Activated naive CD4-positive, alpha-beta T cell treated with anti-CD3 and anti-CD28 coated beads for 36 hours (primary cell): ENCODE measurements at regions of chr19 and their contacts with region 1.

Region 1: GRCh38 chr19:5904352-5905113 is at the start of gene VMAC:
- DNase-seq: peak; percentile 100
- H3K4me3 Mint-ChIP-seq: peak within 1 kb of the TSS; percentile 94
- H3K27ac Mint-ChIP-seq: peak within 1 kb of the TSS; percentile 99
- H3K4me1 Mint-ChIP-seq: peaks cover 37% of the 10 kb centered on the region
- H3K27me3 Mint-ChIP-seq: no peaks in the 10 kb centered on the region
- total RNA-seq, gene VMAC: 1.5 to 2.0 TPM

Region 2: GRCh38 chr19:5622463-5623396 is 281.8 kb before region 1 on chr19 and contains the starts of genes SAFB and SAFB2:
- CTCF ChIA-PET with region 1: no interaction called
- intact Hi-C with region 1: loop called (anchors 5 kb)
- DNase-seq: peak; percentile 99
- H3K4me3 Mint-ChIP-seq: peak within 1 kb of the TSS; percentile 100
- H3K27ac Mint-ChIP-seq: peak within 1 kb of the TSS; percentile 99
- H3K4me1 Mint-ChIP-seq: peaks cover 68% of the 10 kb centered on the region
- H3K27me3 Mint-ChIP-seq: no peaks in the 10 kb centered on the region
- total RNA-seq, gene SAFB: 120 to 129 TPM
- total RNA-seq, gene SAFB2: 108 to 118 TPM

Region 3: DNA sequence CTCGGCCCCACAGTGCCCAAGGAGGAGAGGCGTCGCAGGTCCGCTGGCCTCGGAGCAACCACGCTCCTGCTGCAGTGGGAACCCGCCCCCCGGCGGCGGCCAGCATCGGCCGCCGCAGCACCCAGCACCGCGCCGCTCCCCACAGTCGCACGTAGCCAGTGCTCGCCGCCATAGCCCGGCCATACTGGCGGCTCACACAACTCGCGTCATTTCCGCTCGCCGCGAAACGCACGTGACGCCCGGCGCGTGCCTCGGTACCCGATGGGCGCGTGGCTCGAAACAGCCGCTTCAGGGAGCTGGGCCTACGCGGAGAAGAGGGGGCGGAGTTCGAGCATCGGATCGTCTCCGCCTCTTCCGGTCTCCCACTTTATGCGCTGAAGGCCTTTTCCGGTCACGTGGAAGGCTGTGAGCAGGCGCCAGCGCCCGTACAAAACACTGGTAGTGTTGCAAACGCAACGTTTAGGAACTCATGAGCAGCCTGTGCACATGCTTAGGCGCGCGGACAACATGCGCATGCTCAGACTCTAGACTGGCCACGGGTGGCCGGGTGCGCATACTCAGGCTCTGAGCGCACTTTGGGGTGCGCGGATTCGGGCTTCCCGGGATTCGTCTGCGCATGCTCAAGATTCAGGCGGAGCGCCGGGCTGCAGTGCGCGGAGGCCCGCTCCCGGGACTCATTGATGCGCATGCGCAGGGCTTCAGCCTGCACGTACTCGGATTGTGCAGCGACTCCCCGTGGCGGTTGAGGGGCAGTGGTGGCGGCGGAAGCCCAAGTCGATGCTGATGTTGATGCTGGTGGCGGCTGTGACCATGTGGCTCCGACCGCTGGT is 184.4 kb before region 1 on chr19 and contains the starts of genes CATSPERD and LONP1:
- CTCF ChIA-PET with region 1: no interaction called
- intact Hi-C with region 1: loop called (anchors 1 kb)
- DNase-seq: peak; percentile 99
- H3K4me3 Mint-ChIP-seq: peak within 1 kb of the TSS; percentile 89
- H3K27ac Mint-ChIP-seq: peak within 1 kb of the TSS; percentile 98
- H3K4me1 Mint-ChIP-seq: peaks cover 33% of the 10 kb centered on the region
- H3K27me3 Mint-ChIP-seq: no peaks in the 10 kb centered on the region
- total RNA-seq, gene CATSPERD: not detected
- total RNA-seq, gene LONP1: 223 to 229 TPM

Region 4: GRCh38 chr19:5803752-5804515 is 100.6 kb before region 1 on chr19:
- CTCF ChIA-PET with region 1: interaction called, 48 read pairs
- intact Hi-C with region 1: loop called (anchors 1 kb)
- DNase-seq: peak; percentile 96
- H3K4me3 Mint-ChIP-seq: peak overlapping the region; percentile 70
- H3K27ac Mint-ChIP-seq: no peak overlapping the region
- H3K4me1 Mint-ChIP-seq: peaks cover 25% of the 10 kb centered on the region
- H3K27me3 Mint-ChIP-seq: peaks cover 19% of the 10 kb centered on the region

Region 5: DNA sequence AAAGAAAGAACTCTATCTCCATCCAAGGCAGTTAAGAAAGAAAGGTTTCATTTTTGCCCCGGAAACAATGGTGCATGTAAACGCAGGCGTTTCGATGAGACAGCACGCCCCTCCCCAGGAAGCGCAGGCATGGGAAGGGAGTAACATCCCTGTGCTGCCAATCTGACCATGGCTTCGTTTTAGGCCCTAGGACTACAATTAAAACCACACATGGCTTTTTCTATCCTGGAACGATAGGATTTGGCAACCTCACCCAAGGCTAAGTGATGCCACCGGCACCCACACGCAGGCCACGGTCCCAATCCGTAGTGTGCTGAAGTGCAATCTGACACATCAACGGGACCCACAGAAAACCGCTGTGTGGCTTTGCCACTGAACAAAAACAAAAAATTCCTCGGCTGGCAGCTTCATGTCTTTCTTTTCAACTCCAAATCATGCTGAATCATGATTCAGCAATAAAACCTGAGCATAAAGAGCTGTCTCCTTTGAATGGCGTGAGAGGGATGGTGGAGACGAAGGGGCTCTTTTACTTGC is 49.2 kb after region 1 on chr19:
- CTCF ChIA-PET with region 1: no interaction called
- intact Hi-C with region 1: loop called (anchors 1 kb)
- DNase-seq: peak; percentile 63
- H3K4me3 Mint-ChIP-seq: peak overlapping the region; percentile 36
- H3K27ac Mint-ChIP-seq: peak overlapping the region; percentile 87
- H3K4me1 Mint-ChIP-seq: peaks cover 92% of the 10 kb centered on the region
- H3K27me3 Mint-ChIP-seq: no peaks in the 10 kb centered on the region

Region 6: GRCh38 chr19:6110360-6110977 is 205.9 kb after region 1 on chr19 and contains the start of gene RFX2:
- CTCF ChIA-PET with region 1: no interaction called
- intact Hi-C with region 1: loop called (anchors 1 kb)
- DNase-seq: peak; percentile 99
- H3K4me3 Mint-ChIP-seq: peak within 1 kb of the TSS; percentile 80
- H3K27ac Mint-ChIP-seq: peak within 1 kb of the TSS; percentile 82
- H3K4me1 Mint-ChIP-seq: peaks cover 22% of the 10 kb centered on the region
- H3K27me3 Mint-ChIP-seq: peaks cover 3% of the 10 kb centered on the region
- total RNA-seq, gene RFX2: 4.7 to 6.0 TPM

Region 7: GRCh38 chr19:6424939-6425731 is 520.6 kb after region 1 on chr19:
- CTCF ChIA-PET with region 1: no interaction called
- intact Hi-C with region 1: loop called (anchors 1 kb)
- DNase-seq: peak; percentile 100
- H3K4me3 Mint-ChIP-seq: peak overlapping the region; percentile 76
- H3K27ac Mint-ChIP-seq: peak overlapping the region; percentile 94
- H3K4me1 Mint-ChIP-seq: peaks cover 36% of the 10 kb centered on the region
- H3K27me3 Mint-ChIP-seq: no peaks in the 10 kb centered on the region